Heart left ventricle (tissue), 16 donors: ENCODE measurements at regions of chr20 and their contacts with region 1.

Region 1: GRCh38 chr20:64119681-64120341 is 12.4 kb upstream of the NPBWR2 start:
- DNase-seq: peak in 4 of 5 donors; percentile 15 to 42 (median 18)
- ATAC-seq: peak in 3 of 4 donors; percentile 25 to 40 (median 29)
- H3K4me3 ChIP-seq: peak overlapping the region in 3 of 12 donors; percentile 30 to 41 (median 40)
- H3K27ac ChIP-seq: no peak overlapping the region
- H3K4me1 ChIP-seq: peaks cover 0 to 9% (median 0%) of the 10 kb centered on the region in 12 donors
- H3K27me3 ChIP-seq: peaks cover 0 to 31% (median 14%) of the 10 kb centered on the region in 9 donors
- CTCF ChIP-seq: no peak
- POLR2A ChIP-seq: no peak

Region 2: DNA sequence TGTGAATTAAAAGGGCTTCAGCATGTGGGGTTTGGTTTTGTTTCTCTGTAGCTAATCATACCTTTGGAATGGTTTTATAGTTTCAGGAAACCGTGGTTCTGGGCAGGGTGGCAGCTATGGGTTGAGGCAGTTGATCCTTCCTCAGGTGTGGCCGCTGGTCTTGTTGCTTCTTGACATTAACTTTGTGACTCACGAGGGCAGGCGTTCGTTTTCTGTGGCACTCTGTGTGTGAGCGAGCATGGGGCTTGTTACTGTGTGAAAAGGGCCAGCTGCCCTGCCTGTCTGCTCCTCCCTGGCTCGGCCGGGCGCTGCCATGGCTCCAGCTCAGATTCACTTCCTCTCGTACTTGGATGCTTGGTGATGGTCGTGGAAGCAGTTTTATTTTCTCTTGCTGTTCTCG is 208.6 kb before region 1 on chr20:
- intact Hi-C with region 1: loop called in 1 of 10 experiments (anchors 10 kb)
- DNase-seq: no peak
- ATAC-seq: peak in 3 of 4 donors; percentile 12 to 39 (median 22)
- H3K4me3 ChIP-seq: no peak overlapping the region
- H3K27ac ChIP-seq: peak overlapping the region in 2 of 12 donors; percentile 9 to 33
- H3K4me1 ChIP-seq: peaks cover 0 to 68% (median 24%) of the 10 kb centered on the region in 12 donors
- H3K27me3 ChIP-seq: no peaks in the 10 kb centered on the region
- CTCF ChIP-seq: no peak
- POLR2A ChIP-seq: no peak

Region 3: GRCh38 chr20:64001607-64002011 is 118.2 kb before region 1 on chr20:
- intact Hi-C with region 1: loop called in 1 of 10 experiments (anchors 10 kb)
- DNase-seq: no peak
- ATAC-seq: no peak
- H3K4me3 ChIP-seq: no peak overlapping the region
- H3K27ac ChIP-seq: no peak overlapping the region
- H3K4me1 ChIP-seq: peaks cover 0 to 21% (median 0%) of the 10 kb centered on the region in 12 donors
- H3K27me3 ChIP-seq: no peaks in the 10 kb centered on the region
- CTCF ChIP-seq: no peak
- POLR2A ChIP-seq: no peak

Region 4: DNA sequence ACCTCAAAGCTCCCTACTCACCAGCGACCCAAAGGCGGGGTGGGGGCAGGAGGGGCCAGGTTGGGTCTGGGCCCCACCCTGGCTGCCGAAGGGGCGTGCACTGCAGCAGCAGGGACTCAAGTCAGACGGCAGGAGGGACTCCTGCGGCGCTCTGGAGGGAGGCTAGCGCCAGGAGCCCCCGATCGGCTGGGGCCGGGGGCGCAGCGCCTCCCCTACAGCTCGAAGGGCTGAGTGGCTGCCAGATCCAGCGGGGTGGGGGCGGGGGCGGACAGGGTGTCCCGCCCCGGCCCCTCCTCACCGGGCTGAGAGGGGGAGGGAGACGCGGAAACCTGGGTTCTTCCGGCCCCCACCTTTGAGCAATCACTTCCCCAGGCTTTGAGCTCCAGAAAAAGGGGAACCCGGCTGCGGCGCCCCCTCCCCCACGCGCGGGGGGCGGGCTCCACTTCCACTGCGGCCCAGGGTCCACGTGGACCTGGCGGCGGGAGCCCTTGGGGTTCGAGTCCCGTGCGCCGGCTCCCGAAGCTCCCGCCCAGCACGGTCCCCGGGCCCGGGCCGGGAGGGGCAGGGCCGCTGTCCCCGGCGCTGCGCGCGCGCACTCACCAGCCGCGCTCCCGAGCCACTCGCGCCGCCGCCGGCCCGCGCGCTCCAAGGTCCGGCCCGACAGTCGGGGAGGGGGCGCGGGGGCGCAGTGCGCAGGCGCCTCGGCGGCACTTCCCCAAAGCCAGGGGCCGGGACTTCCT is 40.4 kb before region 1 on chr20 and contains the start of gene RGS19:
- intact Hi-C with region 1: loop called in 7 of 10 experiments (anchors 1 to 5 kb)
- DNase-seq: peak; percentile 80 to 92 (median 85)
- ATAC-seq: peak; percentile 33 to 67 (median 55)
- H3K4me3 ChIP-seq: peak within 1 kb of the TSS; percentile 37 to 93 (median 82)
- H3K27ac ChIP-seq: peak within 1 kb of the TSS; percentile 65 to 95 (median 86)
- H3K4me1 ChIP-seq: peaks cover 2 to 60% (median 27%) of the 10 kb centered on the region in 12 donors
- H3K27me3 ChIP-seq: peaks cover 0 to 10% (median 7%) of the 10 kb centered on the region in 9 donors
- CTCF ChIP-seq: no peak
- POLR2A ChIP-seq: no peak
- total RNA-seq, gene RGS19: 3.2 to 25.6 (median 5.3) TPM